AG04449 (cell line): ENCODE measurements at regions of chr1 and their contacts with region 1.

Region 1: GRCh38 chr1:201348211-201348566 is 29.3 kb downstream of the TNNT2 start:
- DNase-seq: no peak
- H3K4me3 ChIP-seq: no peak overlapping the region
- CTCF ChIP-seq: peak; percentile 78

Region 2: GRCh38 chr1:201268604-201269151 is 79.5 kb before region 1 on chr1:
- CTCF ChIA-PET with region 1: interaction called, 71 read pairs
- POLR2A ChIA-PET with region 1: no interaction called
- DNase-seq: peak; percentile 38
- H3K4me3 ChIP-seq: no peak overlapping the region
- CTCF ChIP-seq: no peak

Region 3: DNA sequence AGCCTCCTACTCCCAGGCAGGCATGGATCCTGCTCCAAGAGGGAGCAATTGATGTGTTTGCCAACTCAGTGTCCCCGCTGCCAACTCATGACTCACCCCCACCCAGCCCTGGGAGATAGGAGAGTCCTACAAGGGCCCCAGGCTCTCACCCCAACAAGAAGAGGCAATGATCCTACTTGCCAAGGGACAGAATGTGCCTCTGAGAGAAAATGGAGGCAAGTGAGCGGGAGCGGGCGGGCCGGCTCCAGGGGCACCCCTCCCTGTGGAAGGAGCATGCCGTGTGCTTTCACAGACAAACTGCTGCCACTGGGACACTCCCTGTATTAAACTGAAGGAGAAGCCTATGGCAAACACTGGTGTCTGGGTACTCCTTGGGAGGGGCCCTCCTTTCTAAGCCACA is 48.2 kb before region 1 on chr1:
- CTCF ChIA-PET with region 1: interaction called, 15 read pairs
- POLR2A ChIA-PET with region 1: no interaction called
- DNase-seq: no peak
- H3K4me3 ChIP-seq: no peak overlapping the region
- CTCF ChIP-seq: no peak

Region 4: DNA sequence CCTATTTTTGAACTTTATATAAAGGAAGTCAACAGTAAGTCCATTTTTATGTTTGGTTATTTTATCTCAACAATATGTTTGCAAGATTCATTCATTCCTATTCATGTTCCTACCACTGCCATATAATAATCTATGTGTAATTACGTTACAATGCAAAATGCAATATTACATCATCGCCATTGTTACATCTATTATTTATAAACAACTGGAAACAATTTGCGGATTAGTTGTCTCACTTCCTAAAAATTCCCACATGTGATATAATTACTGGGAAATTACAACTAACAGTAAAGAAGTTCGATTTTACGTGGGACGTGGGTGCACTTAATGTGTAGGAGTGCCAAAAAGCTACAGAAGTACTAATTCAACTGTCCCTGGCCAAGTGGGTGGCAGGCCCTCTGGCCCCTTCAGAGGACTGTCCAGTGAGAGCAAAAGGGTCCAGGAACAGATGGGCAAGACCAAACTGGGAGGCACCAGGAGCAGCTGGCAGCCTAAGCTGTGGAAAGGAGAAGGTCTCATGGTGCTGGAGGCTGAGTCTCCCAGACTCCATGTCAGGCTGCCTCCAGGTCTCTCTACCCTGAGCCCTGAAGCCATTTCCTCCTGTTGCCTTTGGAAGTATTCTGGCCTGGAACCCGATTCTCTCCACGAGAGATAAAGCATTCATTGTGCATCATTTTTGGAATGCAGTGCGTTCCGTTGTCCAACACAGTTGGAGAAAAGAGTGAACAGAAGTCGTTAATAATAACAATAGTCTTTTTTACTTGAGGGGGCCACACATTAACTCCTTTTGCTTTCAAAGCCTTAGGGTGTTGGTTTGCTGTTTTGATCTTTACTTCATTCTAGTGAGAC is 13.6 kb before region 1 on chr1:
- CTCF ChIA-PET with region 1: interaction called, 129 read pairs
- POLR2A ChIA-PET with region 1: no interaction called
- DNase-seq: no peak
- H3K4me3 ChIP-seq: no peak overlapping the region
- CTCF ChIP-seq: no peak

Region 5: GRCh38 chr1:201385299-201385891 is 37.2 kb after region 1 on chr1:
- CTCF ChIA-PET with region 1: interaction called, 20 read pairs
- POLR2A ChIA-PET with region 1: no interaction called
- DNase-seq: no peak
- H3K4me3 ChIP-seq: no peak overlapping the region
- CTCF ChIP-seq: peak; percentile 86